ENCODE measurements at regions of chr4 and their contacts with region 1.

Region 1: DNA sequence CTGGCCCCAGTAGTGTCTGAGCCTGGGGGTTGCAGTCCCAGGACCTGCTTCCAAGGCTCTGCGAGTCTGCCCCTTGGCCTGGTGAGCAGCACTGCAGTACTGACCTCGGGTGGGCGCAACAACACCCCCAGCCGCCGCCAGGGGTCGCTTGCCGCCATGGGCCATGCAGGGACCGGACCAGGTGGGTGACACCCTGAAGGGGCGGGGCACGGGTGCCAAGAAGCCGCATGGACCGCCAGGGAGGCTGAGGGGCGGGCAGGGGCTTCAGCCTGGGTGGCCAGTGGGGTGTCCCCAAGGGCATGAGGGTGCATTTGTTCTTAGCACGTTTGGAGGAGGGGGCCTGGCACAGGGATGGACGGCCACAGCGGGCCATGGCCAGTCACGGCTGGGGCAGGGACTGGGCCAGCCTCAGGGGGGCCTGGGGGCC is 25.0 kb downstream of the TACC3 start:
- DNase-seq: peak; percentile 64
- H3K4me3 ChIP-seq: no peak overlapping the region
- H3K27ac ChIP-seq: no peak overlapping the region
- H3K4me1 ChIP-seq: peaks cover 5% of the 10 kb centered on the region
- H3K27me3 ChIP-seq: peaks cover 4% of the 10 kb centered on the region
- CTCF ChIP-seq: peak; percentile 75 to 83 (median 76)
- POLR2A ChIP-seq: no peak

Region 2: GRCh38 chr4:1809754-1810511 is 63.7 kb after region 1 on chr4:
- intact Hi-C with region 1: loop called (anchors 5 kb)
- DNase-seq: peak; percentile 62
- H3K4me3 ChIP-seq: no peak overlapping the region
- H3K27ac ChIP-seq: no peak overlapping the region
- H3K4me1 ChIP-seq: peaks cover 8% of the 10 kb centered on the region
- H3K27me3 ChIP-seq: no peaks in the 10 kb centered on the region
- CTCF ChIP-seq: peak; percentile 79 to 92 (median 81)
- POLR2A ChIP-seq: no peak

Region 3: DNA sequence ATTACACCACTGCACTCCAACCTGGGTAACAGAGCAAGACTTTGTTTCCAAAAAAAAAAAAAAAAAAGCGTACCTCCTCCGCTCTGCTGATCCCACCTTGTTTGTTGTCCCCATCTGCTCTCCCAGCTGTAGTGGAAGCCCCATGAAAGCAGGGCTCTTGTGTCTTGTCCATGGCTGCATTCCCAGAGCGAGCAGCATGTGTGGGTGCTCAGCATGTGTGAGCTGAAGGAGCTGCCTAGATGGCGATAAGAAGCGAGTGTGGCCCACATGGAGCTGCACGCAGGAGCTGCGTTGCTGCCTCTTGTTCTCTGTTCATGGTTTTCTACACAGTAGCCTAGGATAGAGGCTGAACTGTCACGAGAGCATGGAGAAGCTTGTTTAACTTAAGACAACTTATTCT is 137.3 kb after region 1 on chr4:
- intact Hi-C with region 1: no loop called
- DNase-seq: no peak
- H3K4me3 ChIP-seq: no peak overlapping the region
- H3K27ac ChIP-seq: no peak overlapping the region
- H3K4me1 ChIP-seq: no peaks in the 10 kb centered on the region
- H3K27me3 ChIP-seq: no peaks in the 10 kb centered on the region
- CTCF ChIP-seq: no peak
- POLR2A ChIP-seq: no peak

Region 4: GRCh38 chr4:1899149-1900086 is 153.1 kb after region 1 on chr4:
- intact Hi-C with region 1: loop called (anchors 5 kb)
- DNase-seq: peak; percentile 69
- H3K4me3 ChIP-seq: no peak overlapping the region
- H3K27ac ChIP-seq: peak overlapping the region; percentile 13 to 38
- H3K4me1 ChIP-seq: peaks cover 4% of the 10 kb centered on the region
- H3K27me3 ChIP-seq: no peaks in the 10 kb centered on the region
- CTCF ChIP-seq: peak; percentile 74 to 89 (median 84)
- POLR2A ChIP-seq: no peak